ENCODE measurements at regions of chr10 and their contacts with region 1.

Region 1: GRCh38 chr10:123559066-123559822 is 106.9 kb upstream of the GPR26 start:
- DNase-seq: peak; percentile 48
- H3K4me3 ChIP-seq: no peak overlapping the region
- H3K27ac ChIP-seq: no peak overlapping the region
- H3K4me1 ChIP-seq: no peaks in the 10 kb centered on the region
- H3K27me3 ChIP-seq: peaks cover 6% of the 10 kb centered on the region
- CTCF ChIP-seq: peak; percentile 93 to 96 (median 94)
- POLR2A ChIP-seq: no peak

Region 2: DNA sequence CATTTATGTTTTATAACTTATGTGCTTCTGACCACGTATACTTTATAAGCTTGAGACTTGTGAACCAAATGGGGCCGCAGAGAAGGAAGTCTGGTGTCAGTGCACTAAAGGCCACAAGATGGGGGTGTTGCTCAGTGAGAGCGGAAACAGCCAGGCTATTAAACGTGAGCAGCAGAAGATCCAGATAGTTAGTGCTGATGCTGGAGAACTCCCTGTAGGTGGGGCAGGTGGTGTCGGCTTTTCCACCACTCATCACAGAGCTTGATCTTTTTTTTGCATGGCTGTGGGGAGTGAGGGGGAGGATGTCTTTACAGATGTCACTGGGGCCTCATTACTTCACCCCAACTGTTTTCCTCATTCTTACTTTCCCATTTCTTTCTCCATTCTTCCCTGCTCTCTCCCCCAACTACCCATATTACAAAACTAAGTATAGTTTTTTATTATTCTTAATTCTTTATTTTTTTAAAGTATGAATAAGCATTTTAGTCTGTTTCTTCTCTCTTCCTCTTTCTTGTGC is 515.8 kb before region 1 on chr10:
- intact Hi-C with region 1: loop called (anchors 5 kb)
- DNase-seq: peak; percentile 51
- H3K4me3 ChIP-seq: no peak overlapping the region
- H3K27ac ChIP-seq: no peak overlapping the region
- H3K4me1 ChIP-seq: no peaks in the 10 kb centered on the region
- H3K27me3 ChIP-seq: no peaks in the 10 kb centered on the region
- CTCF ChIP-seq: peak in 3 of 4 experiments; percentile 62 to 63 (median 62)
- POLR2A ChIP-seq: no peak

Region 3: DNA sequence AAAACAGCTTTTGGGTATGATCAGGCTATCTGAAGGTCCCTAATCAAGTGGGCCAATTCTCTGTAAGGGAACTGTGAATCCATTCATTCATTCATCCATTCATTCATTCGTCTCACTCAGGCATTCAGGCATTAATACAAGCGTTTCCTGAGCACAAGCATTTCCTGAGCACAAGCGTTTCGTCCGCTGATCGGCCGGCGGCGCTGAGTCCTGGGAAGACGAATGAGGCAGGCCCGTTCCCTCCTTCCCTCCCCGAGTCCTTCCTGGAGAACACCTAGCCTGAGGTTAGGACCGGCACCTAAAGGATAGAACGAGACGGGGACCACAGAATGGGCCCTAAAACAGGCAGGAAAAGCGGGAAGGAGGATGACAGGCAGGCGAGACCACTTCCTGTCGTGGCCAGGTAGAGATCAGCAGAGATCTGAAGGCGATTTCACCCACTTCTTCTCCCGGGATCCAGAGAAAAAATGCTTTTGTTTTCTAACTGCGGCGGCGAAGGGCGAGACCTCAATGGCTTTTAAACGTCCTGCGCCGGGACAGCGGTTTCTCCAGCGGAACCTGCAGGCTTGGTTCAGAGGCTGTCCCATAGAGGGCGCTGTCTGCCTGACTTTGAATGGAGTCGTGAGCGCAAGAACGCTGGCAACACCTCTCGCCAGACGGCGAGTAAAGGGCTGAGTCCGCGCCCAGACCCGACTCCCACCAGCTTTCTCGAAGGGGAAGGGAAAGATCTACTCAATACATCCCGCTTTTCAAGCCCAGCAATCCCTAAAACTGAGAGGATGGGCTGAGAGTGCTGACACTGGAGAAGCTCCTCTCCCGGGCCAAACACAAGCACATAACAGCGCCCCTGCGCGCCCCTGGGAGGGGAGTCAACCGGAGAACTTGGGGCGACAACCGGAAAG is 426.4 kb before region 1 on chr10:
- intact Hi-C with region 1: loop called (anchors 2 kb)
- DNase-seq: peak; percentile 81
- H3K4me3 ChIP-seq: no peak overlapping the region
- H3K27ac ChIP-seq: no peak overlapping the region
- H3K4me1 ChIP-seq: peaks cover 4% of the 10 kb centered on the region
- H3K27me3 ChIP-seq: peaks cover 59% of the 10 kb centered on the region
- CTCF ChIP-seq: peak; percentile 66 to 92 (median 89)
- POLR2A ChIP-seq: no peak